Sciatic nerve (tissue), 2 donors: ENCODE measurements at regions of chr2 and their contacts with region 1.

Region 1: DNA sequence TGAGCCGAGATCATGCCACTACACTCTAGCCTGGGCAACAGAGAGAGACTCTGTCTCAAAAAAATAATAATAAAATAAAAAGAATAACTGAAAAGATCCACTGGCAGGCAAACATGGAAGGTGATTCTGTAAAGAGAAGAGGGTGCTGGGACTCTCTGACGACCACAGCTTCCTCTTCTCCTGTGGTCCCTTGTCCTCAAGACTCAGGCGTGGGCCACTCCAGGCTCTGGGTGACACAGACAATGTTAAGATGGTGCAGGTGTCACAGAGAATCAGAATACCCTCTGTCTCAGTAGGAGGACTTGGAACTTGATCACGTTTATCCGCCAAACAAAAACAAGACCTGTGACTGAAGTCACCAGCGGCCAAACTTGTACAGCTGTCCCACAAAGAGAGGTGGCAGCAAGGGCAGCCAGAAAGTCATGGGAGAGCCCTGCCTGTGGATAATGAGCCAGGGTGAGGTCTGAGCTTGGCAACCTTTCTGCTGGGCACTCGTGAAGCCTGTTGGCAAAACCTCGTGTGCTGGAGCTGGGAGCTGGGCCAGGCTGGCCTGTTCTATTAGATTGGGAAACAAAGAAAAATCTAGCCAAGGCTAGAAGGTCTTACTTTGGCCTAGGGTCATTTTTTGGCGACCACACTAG is 76.4 kb upstream of the ITGA6 start:
- DNase-seq: no peak
- ATAC-seq: peak; percentile 86

Region 2: GRCh38 chr2:172181840-172182239 is 169.1 kb before region 1 on chr2:
- intact Hi-C with region 1: loop called (anchors 5 kb)
- DNase-seq: no peak
- ATAC-seq: peak; percentile 70